ENCODE measurements at regions of chr11 and their contacts with region 1.

Region 1: DNA sequence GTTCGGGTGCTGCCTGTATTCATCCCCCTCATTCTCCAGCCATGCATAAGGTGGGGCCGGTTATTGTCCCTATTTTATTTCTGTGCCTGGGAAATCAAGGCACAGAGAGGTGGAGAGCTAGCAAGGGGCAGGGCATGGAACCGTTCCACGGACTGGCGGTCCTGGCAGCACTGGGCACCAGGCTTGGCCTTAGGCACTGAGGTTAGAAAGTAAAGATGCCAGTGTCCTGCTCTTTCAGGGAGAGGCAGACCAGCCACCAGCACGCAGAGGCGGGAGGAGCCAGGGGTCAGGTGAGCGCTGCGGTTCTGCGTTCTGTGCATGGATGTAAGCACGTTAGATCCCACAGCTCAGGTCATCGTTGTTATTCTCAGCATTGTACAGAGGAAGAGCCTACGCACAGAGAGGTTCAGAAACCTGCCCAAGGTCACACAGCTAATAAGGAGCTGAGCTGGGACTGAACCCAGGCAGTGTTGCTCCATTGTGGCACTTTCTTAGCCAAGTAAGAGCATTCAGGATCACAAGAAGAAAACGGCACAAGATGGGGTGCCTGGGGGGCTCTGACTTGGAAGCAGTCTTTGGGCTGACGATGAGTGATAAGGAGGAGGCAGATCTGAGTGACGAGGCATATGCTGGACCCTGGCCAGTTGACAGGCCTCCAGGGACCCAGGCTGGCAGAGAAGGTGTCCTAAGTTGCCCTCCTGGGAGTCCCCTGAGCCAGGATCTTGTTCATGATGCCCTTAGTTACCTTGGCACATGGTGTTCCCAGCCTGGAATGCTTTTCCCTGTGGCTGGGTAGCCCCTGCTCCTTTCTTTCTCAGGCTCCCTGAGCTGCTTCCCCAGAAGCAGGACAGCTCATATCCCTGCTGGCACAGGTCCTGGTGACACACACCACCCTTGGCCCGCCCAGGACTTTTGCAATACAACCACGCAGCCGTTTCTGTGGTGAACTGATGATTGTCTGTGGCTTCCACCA is 41.1 kb downstream of the OSBPL5 start:
- DNase-seq: peak; percentile 94
- H3K4me3 ChIP-seq: no peak overlapping the region
- H3K27ac ChIP-seq: peak overlapping the region; percentile 29
- H3K4me1 ChIP-seq: peaks cover 42% of the 10 kb centered on the region
- H3K27me3 ChIP-seq: no peaks in the 10 kb centered on the region
- CTCF ChIP-seq: peak in 1 of 2 donors; percentile 29

Region 2: DNA sequence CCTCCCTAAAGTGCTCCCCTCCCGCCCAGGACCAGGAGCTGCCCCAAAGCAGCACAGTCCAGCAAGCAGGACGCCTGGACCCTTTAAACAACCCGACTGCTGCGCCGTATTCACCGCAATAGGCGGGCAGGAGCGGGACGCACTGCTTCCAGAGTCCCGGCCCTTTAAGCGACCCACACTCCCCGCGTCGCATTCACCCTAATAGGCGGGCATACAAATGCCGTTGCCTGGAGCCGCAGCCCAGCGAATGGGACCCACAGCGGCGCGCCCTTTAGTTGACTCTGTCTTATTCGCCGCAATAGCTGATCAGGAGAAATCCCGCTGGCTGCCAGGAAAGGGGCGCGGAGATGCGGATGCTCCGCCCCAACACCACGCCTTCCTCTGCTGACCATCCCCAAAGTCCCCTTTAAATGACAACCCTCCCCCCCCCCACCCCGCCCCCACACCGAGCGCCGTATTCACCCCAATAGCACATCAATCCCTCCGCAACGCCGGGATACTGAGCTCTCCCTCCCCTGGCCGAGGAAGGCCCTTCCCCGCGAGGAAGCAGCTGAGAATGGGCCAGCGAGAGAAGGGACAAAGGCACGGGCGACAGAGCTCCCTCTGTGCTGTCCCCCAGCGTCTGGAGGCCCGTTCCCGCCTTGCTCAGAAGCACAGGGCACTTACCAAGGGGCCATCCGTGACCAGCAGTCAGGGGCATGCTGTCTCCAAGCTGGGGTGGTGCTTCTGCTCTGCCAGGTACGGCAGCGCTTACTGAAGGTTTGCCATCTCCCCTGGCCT is 36.4 kb after region 1 on chr11:
- CTCF ChIA-PET with region 1: no interaction called
- dilution Hi-C with region 1: no loop called
- in situ Hi-C with region 1: no loop called
- intact Hi-C with region 1: loop called (anchors 1 kb)
- DNase-seq: peak; percentile 75
- H3K4me3 ChIP-seq: peak overlapping the region; percentile 26 to 58 (median 46)
- H3K27ac ChIP-seq: no peak overlapping the region
- H3K4me1 ChIP-seq: peaks cover 48% of the 10 kb centered on the region
- H3K27me3 ChIP-seq: no peaks in the 10 kb centered on the region
- CTCF ChIP-seq: no peak

Region 3: DNA sequence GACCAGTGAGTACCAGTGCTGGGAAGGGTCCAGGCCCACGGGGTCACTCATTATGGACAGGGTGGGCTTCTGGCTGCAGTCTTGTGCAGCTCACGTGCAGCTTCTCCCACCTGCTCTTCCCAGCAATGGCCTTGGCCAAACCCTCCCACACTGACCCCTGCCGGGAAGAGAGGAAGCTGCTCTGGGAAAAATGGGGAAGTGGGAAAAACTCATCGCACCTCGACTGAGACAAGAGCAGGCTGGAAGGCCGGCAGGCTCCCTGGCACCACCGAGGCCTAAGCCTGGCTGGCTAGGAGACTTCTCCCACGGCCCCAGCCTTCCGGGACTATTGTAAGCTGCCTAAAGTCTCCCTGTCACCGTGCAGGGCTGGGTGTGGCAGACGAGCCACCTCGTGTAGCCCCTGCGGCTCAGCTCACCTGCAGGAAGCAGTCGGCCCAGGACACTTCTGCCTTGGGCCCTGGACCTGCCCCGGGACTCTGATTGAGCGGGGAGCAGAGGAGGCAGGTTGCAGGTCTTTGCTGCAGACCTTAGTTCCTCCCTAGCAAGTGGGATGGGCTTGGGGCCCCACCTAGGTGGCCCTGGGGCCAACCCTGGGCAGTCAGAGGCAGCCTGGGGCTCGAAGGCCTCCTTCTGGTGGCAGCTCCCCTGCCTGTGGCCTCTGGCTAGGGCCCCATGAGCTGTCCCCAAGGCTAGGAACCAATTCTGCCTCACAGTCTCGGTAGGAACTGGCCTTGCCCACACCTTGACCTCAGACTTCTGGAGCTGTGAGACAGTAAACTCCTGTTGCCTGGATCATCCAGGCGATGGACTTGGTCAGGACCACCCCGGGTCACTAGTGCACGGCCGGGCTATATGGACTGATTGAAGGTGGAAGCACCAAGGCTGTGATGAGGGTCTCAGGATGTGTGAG is 71.5 kb after region 1 on chr11:
- CTCF ChIA-PET with region 1: interaction called, 15 read pairs
- dilution Hi-C with region 1: no loop called
- in situ Hi-C with region 1: no loop called
- intact Hi-C with region 1: no loop called
- DNase-seq: no peak
- H3K4me3 ChIP-seq: no peak overlapping the region
- H3K27ac ChIP-seq: no peak overlapping the region
- H3K4me1 ChIP-seq: no peaks in the 10 kb centered on the region
- H3K27me3 ChIP-seq: no peaks in the 10 kb centered on the region
- CTCF ChIP-seq: peak; percentile 31 to 51

Region 4: GRCh38 chr11:3205261-3206135 is 81.5 kb after region 1 on chr11:
- CTCF ChIA-PET with region 1: no interaction called
- dilution Hi-C with region 1: loop called (anchors 5 kb)
- in situ Hi-C with region 1: no loop called
- intact Hi-C with region 1: no loop called
- DNase-seq: no peak
- H3K4me3 ChIP-seq: no peak overlapping the region
- H3K27ac ChIP-seq: no peak overlapping the region
- H3K4me1 ChIP-seq: no peaks in the 10 kb centered on the region
- H3K27me3 ChIP-seq: peaks cover 26% of the 10 kb centered on the region
- CTCF ChIP-seq: no peak